ENCODE measurements at regions of chr1 and their contacts with region 1.

Region 1: GRCh38 chr1:51192213-51192843 is 43.7 kb upstream of the RNF11 start:
- DNase-seq: peak; percentile 76
- H3K4me3 Mint-ChIP-seq: no peak overlapping the region
- H3K27ac Mint-ChIP-seq: no peak overlapping the region
- H3K4me1 Mint-ChIP-seq: no peaks in the 10 kb centered on the region
- H3K27me3 Mint-ChIP-seq: no peaks in the 10 kb centered on the region
- CTCF ChIP-seq: peak; percentile 85

Region 2: DNA sequence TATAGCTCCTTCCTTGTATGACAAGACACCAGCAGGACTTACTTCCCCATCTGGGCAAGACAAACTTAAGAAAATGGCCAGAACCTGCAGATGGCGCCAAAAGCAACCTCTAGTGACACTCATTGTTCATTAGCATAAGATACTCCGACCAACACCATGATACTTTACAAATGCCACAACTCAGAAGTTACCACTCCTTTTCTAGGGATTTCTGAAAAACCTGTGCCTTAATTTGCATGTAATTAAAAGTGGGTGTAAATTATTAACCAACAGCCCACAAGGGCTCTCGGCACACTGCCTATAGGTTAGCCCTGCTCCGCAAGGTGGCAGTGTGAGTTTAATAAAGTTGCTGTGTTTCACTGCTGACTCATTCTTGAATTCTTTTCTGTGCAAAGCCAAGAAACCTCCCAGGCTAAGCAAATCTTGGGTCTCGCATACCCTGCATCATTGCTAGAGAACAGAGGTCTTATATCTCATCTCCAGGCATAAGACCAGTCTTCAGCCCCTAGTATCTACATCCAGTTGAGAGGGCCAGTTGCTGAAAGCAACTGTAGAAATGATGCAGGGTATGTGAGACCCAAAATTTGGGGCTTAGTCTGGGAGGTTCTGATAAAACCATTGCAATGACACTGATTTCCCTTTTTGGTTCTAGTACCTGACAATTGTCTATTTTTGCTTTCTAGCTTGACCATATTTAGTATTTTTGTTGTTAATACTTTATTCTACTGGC is 318.7 kb before region 1 on chr1:
- CTCF ChIA-PET with region 1: interaction called, 12 read pairs
- intact Hi-C with region 1: loop called (anchors 1 kb)
- DNase-seq: peak; percentile 80
- H3K4me3 Mint-ChIP-seq: peak overlapping the region; percentile 50
- H3K27ac Mint-ChIP-seq: peak overlapping the region; percentile 49
- H3K4me1 Mint-ChIP-seq: peaks cover 17% of the 10 kb centered on the region
- H3K27me3 Mint-ChIP-seq: no peaks in the 10 kb centered on the region
- CTCF ChIP-seq: peak; percentile 87

Region 3: GRCh38 chr1:50978144-50978851 is 214.0 kb before region 1 on chr1:
- CTCF ChIA-PET with region 1: no interaction called
- intact Hi-C with region 1: loop called (anchors 5 kb)
- DNase-seq: peak; percentile 82
- H3K4me3 Mint-ChIP-seq: peak overlapping the region; percentile 78
- H3K27ac Mint-ChIP-seq: peak overlapping the region; percentile 96
- H3K4me1 Mint-ChIP-seq: peaks cover 24% of the 10 kb centered on the region
- H3K27me3 Mint-ChIP-seq: no peaks in the 10 kb centered on the region
- CTCF ChIP-seq: no peak

Region 4: GRCh38 chr1:51088488-51088887 is 103.8 kb before region 1 on chr1:
- CTCF ChIA-PET with region 1: interaction called, 7 read pairs
- intact Hi-C with region 1: loop called (anchors 1 kb)
- DNase-seq: no peak
- H3K4me3 Mint-ChIP-seq: no peak overlapping the region
- H3K27ac Mint-ChIP-seq: no peak overlapping the region
- H3K4me1 Mint-ChIP-seq: no peaks in the 10 kb centered on the region
- H3K27me3 Mint-ChIP-seq: peaks cover 20% of the 10 kb centered on the region
- CTCF ChIP-seq: no peak

Region 5: GRCh38 chr1:51139474-51139873 is 52.9 kb before region 1 on chr1:
- CTCF ChIA-PET with region 1: no interaction called
- intact Hi-C with region 1: no loop called
- DNase-seq: no peak
- H3K4me3 Mint-ChIP-seq: no peak overlapping the region
- H3K27ac Mint-ChIP-seq: no peak overlapping the region
- H3K4me1 Mint-ChIP-seq: no peaks in the 10 kb centered on the region
- H3K27me3 Mint-ChIP-seq: no peaks in the 10 kb centered on the region
- CTCF ChIP-seq: peak; percentile 13

Region 6: GRCh38 chr1:51616901-51617708 is 424.8 kb after region 1 on chr1 and contains the start of gene OSBPL9:
- CTCF ChIA-PET with region 1: no interaction called
- intact Hi-C with region 1: no loop called
- DNase-seq: peak; percentile 79
- H3K4me3 Mint-ChIP-seq: peak within 1 kb of the TSS; percentile 97
- H3K27ac Mint-ChIP-seq: peak within 1 kb of the TSS; percentile 98
- H3K4me1 Mint-ChIP-seq: peaks cover 55% of the 10 kb centered on the region
- H3K27me3 Mint-ChIP-seq: no peaks in the 10 kb centered on the region
- CTCF ChIP-seq: no peak
- total RNA-seq, gene OSBPL9: 64.4 and 67.6 TPM in 2 replicates

Measured in Calu3 (cell line).